ENCODE measurements at regions of chr3 and their contacts with region 1.

Region 1: DNA sequence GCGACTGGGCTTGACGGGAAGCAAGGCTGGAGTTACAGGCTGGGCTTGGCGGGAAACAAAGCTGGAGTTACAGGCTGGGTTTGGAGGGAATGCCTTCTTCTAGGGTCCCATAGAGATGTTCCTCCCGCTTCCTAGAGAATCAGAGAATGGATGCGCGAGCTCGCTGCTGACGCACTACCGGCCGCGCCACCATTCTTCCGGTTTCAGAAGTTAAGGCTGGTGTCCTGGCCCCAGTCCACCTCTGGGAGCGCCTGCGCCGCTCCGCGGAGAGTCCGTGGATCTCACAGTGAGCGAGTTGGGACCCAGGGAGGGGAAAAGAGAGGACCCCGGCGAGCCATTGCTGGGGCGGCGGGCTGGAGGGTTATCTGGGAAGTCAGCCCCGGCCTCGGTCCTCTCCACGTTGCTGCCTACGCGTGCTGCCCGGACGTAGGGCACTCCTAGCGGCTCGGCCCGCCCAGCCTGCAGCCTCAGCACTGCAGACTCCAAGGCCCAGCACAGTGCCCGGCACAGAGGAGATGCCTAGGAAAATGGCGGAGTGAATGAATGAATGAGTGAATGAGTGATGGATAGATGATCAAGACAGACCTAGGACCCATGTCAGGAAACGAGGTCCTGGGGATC is at the start of gene ZNF502:
- H3K4me3 Mint-ChIP-seq: peak within 1 kb of the TSS; percentile 93
- H3K27ac Mint-ChIP-seq: peak within 1 kb of the TSS; percentile 93
- H3K4me1 Mint-ChIP-seq: peaks cover 7% of the 10 kb centered on the region
- H3K27me3 Mint-ChIP-seq: peaks cover 4% of the 10 kb centered on the region

Region 2: GRCh38 chr3:44729384-44729910 is 16.9 kb after region 1 on chr3 and contains the start of gene ZNF501:
- intact Hi-C with region 1: loop called (anchors 2 kb)
- H3K4me3 Mint-ChIP-seq: peak within 1 kb of the TSS; percentile 98
- H3K27ac Mint-ChIP-seq: peak within 1 kb of the TSS; percentile 91
- H3K4me1 Mint-ChIP-seq: peaks cover 16% of the 10 kb centered on the region
- H3K27me3 Mint-ChIP-seq: no peaks in the 10 kb centered on the region